HAP-1 (cell line): ENCODE measurements at regions of chr7 and their contacts with region 1.

Region 1: DNA sequence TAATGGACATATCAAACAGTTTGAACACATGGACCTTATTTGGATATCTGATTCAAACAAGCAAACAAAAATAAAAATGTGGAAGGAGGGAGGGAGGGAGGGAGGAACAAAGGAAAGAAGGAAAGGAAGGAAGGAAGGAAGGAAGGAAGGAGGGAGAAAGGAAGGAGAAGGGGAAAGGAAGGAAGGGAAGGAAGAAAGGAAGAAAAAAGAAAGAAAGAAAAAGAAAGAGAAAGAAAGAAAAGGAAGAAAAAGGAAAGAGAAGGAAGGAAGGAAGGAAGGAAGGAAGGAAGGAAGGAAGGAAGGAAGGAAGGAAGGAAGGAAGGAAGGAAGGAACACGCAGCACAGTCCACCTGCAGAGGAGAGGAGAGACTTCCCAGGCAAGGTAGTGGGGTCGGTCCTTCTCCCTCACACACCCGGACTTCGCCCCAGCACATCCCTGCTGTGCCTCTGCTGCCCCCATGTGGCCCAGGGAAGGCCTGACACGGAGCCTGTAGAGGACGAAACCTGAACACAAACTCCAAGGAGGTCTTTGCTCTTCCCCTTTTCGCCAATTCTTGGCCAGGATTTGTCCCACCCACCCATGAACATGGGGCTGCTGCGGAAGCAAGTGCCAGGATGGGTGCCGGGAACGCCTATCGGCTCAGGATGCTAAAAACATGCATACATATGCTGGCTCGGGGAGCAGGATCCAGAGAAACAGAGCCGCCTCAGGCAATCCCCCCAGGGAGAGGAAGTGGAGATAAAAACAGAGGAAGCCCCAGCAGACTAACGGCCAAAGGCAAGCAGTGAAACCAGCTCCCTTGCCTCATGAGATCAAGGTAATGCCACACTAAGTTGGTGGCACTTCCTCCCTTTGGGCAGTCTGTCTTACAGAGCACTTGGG is 52.3 kb upstream of the DGKI start:
- DNase-seq: peak; percentile 57 to 89
- H3K4me3 ChIP-seq: no peak overlapping the region
- H3K4me1 ChIP-seq: no peaks in the 10 kb centered on the region
- H3K27me3 ChIP-seq: no peaks in the 10 kb centered on the region

Region 2: GRCh38 chr7:137606061-137606674 is 292.9 kb before region 1 on chr7:
- in situ Hi-C with region 1: loop called (anchors 5 kb)
- DNase-seq: peak in 1 of 2 experiments; percentile 48
- H3K4me3 ChIP-seq: no peak overlapping the region
- H3K4me1 ChIP-seq: no peaks in the 10 kb centered on the region; the same call in 1 of the 2 replicates
- H3K27me3 ChIP-seq: peaks cover 44% of the 10 kb centered on the region

Region 3: DNA sequence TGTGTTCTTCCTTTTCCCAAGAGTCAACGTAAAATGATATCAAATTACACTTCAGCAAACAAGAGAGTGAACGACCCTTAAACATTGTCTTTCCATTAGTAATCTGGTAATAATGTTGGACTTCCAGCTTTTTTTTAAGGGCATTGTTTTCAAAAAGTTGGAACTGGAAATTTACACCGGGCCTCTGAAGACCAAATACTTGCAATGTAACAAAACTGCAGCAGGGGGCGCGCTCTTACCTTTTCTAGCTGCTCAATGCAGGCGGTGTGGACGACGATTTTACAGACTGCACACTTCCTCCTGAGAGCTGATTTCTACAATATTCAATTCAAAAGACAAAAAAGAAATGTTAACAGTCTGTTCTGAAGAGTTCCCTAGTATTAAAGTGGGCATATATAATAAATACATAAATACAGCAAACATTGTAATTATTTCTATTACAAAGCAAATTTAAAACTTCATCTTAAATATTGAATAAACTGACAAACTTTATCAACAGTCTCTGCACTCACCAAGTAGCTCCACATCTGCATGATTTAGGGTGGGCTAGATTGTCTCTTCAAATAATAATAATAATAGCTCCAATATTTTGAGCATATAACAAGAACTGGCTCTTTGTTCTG is 242.7 kb before region 1 on chr7:
- in situ Hi-C with region 1: loop called (anchors 5 kb)
- DNase-seq: peak; percentile 55 to 86
- H3K4me3 ChIP-seq: no peak overlapping the region
- H3K4me1 ChIP-seq: peaks cover 7% of the 10 kb centered on the region
- H3K27me3 ChIP-seq: peaks cover 7% of the 10 kb centered on the region; the same call in 1 of the 2 replicates